ENCODE measurements at regions of chr2 and their contacts with region 1.

Region 1: DNA sequence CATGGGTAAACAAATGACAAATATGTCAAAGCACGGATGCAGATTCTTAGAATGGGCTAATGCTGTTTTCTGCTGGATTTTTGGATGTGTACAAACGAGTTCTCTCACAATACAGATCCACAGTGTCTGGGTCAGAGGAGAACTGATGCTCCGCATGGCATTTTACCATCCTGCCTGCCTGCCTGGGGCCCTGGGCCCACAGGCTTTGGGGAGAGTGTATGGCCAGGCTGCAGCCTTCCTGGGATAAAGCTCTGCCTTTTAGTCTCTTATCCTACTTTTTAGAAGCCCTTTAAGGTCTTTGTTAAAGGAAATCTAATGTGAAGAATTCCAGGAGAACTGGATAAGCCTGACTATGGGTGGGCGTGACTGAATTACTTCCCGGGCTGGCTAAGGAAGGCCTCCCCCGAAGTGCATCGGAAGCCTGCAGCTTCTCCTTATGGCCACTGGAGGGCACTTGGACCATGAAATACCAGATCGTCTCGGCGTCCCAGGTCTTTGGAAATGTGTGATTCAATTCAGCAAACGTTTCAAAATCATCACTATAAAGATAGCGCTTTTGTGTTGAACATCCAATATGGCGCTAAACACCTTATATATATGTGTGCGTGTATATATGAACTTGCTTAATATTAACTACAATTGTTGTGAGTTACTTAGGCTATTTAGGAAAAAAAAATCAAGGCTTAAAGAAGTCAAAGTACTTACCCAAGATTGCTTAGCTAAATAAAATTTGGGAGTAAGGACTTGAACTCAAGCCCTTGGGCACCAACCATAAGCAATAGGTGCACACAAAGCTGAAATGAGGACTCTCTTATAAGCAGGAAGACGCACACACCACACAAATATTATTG is 15.2 kb upstream of the DNPEP start:
- DNase-seq: peak; percentile 86
- H3K4me3 Mint-ChIP-seq: no peak overlapping the region
- H3K27ac Mint-ChIP-seq: no peak overlapping the region
- H3K4me1 Mint-ChIP-seq: no peaks in the 10 kb centered on the region
- H3K27me3 Mint-ChIP-seq: peaks cover 9% of the 10 kb centered on the region

Region 2: DNA sequence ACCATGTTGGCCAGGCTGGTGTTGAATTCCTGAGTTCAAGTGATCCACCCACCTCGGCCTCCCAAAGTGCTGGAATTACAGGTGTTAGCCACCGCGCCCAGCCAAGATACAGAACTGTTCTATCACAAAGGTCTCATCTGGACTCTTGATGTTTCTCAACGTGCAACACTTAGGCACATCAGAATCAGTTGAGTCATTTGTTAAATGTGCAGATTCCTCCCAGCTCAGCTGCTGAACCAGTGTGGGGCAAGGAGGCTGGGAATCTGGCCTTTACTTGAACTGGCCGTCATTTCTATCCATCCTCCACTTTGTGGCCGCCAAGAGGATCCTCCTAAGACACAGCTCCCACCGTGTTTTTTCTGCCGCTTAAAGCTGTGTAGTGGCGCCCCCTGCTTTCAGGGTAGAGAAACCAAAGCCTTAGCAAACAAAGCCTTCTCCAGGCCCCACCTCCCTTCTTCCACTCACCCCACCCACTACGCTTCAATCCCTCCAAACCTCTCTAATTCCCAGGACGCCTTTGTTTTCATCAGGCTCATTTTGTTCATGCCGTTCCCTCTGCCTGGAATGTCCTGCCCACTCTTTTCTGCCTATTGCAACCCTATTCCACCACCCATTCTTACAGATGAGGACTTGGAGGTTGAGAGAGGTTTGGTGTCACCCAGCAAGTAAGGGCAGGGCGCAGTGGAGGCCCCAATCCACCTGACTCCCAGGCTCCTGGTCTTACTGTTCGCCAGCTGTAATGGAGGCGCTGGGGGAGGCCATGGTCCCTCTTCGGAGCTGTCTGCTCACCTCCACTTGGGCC is 31.0 kb after region 1 on chr2:
- intact Hi-C with region 1: loop called (anchors 1 kb)
- DNase-seq: peak; percentile 72
- H3K4me3 Mint-ChIP-seq: no peak overlapping the region
- H3K27ac Mint-ChIP-seq: no peak overlapping the region
- H3K4me1 Mint-ChIP-seq: no peaks in the 10 kb centered on the region
- H3K27me3 Mint-ChIP-seq: peaks cover 30% of the 10 kb centered on the region

Region 3: GRCh38 chr2:219475697-219476651 is 73.1 kb after region 1 on chr2:
- intact Hi-C with region 1: loop called (anchors 5 kb)
- DNase-seq: peak; percentile 88
- H3K4me3 Mint-ChIP-seq: no peak overlapping the region
- H3K27ac Mint-ChIP-seq: no peak overlapping the region
- H3K4me1 Mint-ChIP-seq: no peaks in the 10 kb centered on the region
- H3K27me3 Mint-ChIP-seq: no peaks in the 10 kb centered on the region

Measured in activated CD4-positive, alpha-beta T cell treated with anti-CD3 and anti-CD28 coated beads, Interleukin-2, amount 10 ng/mL, durations not matched to agents 24 days and 14 days (primary cell).